Left lung (tissue), 14 donors: ENCODE measurements at regions of chr2 and their contacts with region 1.

Region 1: GRCh38 chr2:191051825-191052778 is 38.1 kb upstream of the STAT1 start:
- DNase-seq: peak in 2 of 4 donors; percentile 49 to 53
- ATAC-seq: peak; percentile 85
- H3K4me3 ChIP-seq: no peak overlapping the region
- H3K27ac ChIP-seq: no peak overlapping the region
- H3K4me1 ChIP-seq: peaks cover 0 to 38% of the 10 kb centered on the region in 2 donors
- H3K27me3 ChIP-seq: no peaks in the 10 kb centered on the region
- CTCF ChIP-seq: peak; percentile 46 to 61

Region 2: GRCh38 chr2:190858817-190859216 is 193.3 kb before region 1 on chr2:
- intact Hi-C with region 1: no loop called
- DNase-seq: no peak
- ATAC-seq: peak; percentile 64
- H3K4me3 ChIP-seq: no peak overlapping the region
- H3K27ac ChIP-seq: no peak overlapping the region
- H3K4me1 ChIP-seq: peaks cover 14 to 16% of the 10 kb centered on the region in 2 donors
- H3K27me3 ChIP-seq: no peaks in the 10 kb centered on the region
- CTCF ChIP-seq: no peak

Region 3: DNA sequence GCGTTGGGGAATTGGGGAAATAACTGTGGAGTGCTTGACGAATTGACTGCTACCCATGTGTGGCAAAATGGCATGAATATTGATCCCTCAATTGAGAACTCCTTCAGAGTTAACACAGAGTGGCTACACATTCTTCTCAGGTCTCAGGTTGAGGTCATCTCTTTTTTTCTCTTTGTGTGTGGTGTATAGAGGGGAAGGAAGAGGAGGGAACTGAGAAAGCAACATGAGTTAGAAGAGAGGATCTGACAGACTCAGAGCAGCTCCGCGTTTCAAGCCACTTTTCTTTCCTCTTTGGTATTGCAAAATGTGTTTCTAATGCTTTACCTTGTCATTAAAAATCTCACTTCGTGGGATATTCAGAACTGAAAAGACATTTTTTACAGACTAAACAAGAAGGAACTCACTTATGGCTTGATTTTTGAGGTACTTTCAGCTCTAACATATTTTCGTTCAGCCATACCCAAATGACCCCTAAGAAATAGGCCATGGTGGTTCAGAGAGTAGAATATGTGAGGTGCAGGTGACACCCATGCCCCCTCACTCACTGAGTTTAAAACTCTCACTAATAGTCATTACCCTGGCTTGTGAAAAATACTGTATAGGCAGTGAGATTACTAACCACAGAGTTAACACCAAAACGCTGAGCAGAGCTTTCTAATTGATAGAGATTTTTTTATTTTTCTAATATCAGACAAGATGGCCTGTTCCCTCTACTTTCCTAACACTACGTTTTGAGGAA is 76.2 kb after region 1 on chr2:
- intact Hi-C with region 1: no loop called
- DNase-seq: no peak
- ATAC-seq: no peak
- H3K4me3 ChIP-seq: no peak overlapping the region
- H3K27ac ChIP-seq: no peak overlapping the region
- H3K4me1 ChIP-seq: no peaks in the 10 kb centered on the region
- H3K27me3 ChIP-seq: no peaks in the 10 kb centered on the region
- CTCF ChIP-seq: no peak

Region 4: GRCh38 chr2:191150600-191151330 is 98.7 kb after region 1 on chr2 and contains the start of gene STAT4:
- intact Hi-C with region 1: loop called in 1 of 2 experiments (anchors 10 kb)
- DNase-seq: peak in 3 of 4 donors; percentile 64 to 89 (median 77)
- ATAC-seq: peak; percentile 90
- H3K4me3 ChIP-seq: peak within 1 kb of the TSS; percentile 38 to 56
- H3K27ac ChIP-seq: peak within 1 kb of the TSS; percentile 46 to 77
- H3K4me1 ChIP-seq: peaks cover 0 to 15% of the 10 kb centered on the region in 2 donors
- H3K27me3 ChIP-seq: no peaks in the 10 kb centered on the region
- CTCF ChIP-seq: no peak
- polyA plus RNA-seq, gene STAT4: 6.5 to 11.5 (median 8.6) TPM